ENCODE measurements at regions of chr20 and their contacts with region 1.

Region 1: GRCh38 chr20:59495894-59496510 is 108.3 kb upstream of the PHACTR3 start:
- DNase-seq: peak; percentile 80
- ATAC-seq: peak; percentile 95
- H3K4me3 Mint-ChIP-seq: no peak overlapping the region
- H3K27ac Mint-ChIP-seq: no peak overlapping the region
- H3K4me1 Mint-ChIP-seq: no peaks in the 10 kb centered on the region
- H3K27me3 Mint-ChIP-seq: peaks cover 28% of the 10 kb centered on the region
- CTCF ChIP-seq: peak; percentile 73

Region 2: DNA sequence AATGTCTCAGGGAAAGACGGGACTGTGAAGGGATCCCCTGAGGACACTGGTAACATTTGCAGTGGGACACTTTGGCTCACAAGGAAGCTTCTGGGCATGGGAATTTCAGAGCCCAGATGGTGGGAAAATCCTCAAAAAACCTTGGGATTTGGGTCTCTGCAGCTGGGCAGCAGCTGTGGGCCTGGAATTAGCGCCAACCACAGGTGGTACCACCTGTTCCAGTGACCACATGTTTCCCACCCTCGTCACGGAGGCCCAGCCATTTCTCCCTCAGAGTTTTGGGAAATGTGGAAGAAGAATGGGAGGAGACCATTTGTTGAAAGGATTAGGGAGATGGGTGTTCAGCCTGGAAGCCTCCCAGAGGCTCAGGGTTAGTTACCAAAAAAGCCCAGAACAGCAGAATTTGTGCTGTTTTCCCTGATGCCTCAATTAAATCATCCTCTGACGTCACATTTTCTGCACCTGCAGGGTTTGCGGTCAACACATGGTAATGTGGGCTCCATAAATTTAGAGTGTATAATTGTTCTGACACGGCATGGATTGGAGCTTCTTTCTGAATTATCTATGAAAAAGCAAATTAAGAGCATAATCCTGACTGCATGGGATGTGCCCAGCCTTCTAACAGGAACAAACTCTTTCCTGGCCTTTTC is 161.2 kb before region 1 on chr20:
- CTCF ChIA-PET with region 1: no interaction called
- POLR2A ChIA-PET with region 1: no interaction called
- DNase-seq: no peak
- ATAC-seq: no peak
- H3K4me3 Mint-ChIP-seq: no peak overlapping the region
- H3K27ac Mint-ChIP-seq: no peak overlapping the region
- H3K4me1 Mint-ChIP-seq: no peaks in the 10 kb centered on the region
- H3K27me3 Mint-ChIP-seq: peaks cover 2% of the 10 kb centered on the region; the same call in 1 of the 2 replicates
- CTCF ChIP-seq: no peak

Region 3: GRCh38 chr20:59403261-59403961 is 92.6 kb before region 1 on chr20:
- CTCF ChIA-PET with region 1: interaction called, 17 read pairs
- POLR2A ChIA-PET with region 1: no interaction called
- DNase-seq: peak; percentile 86
- ATAC-seq: peak; percentile 76
- H3K4me3 Mint-ChIP-seq: peak overlapping the region; percentile 58; the same call in 1 of the 2 replicates
- H3K27ac Mint-ChIP-seq: no peak overlapping the region
- H3K4me1 Mint-ChIP-seq: peaks cover 16% of the 10 kb centered on the region
- H3K27me3 Mint-ChIP-seq: peaks cover 12% of the 10 kb centered on the region
- CTCF ChIP-seq: peak; percentile 100

Region 4: DNA sequence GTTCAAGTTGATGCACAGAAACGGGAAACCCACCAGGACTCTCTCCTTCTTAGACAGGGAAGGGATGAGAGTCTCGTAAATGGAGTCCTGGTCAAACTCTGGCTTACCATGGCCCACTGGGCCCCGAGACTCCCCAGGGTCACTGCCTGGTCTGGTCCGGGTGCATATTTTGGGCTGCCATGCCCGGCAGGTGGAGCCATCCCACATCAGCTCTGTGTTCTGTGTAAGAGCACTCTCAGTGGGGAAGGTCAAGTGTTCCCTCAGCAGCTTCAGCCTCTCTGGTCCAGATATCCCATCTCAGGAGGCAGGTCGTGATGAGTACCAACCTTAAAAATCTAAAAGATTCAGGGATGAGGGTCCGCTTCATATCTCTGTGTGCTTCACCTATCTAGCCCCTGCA is 56.8 kb before region 1 on chr20:
- CTCF ChIA-PET with region 1: interaction called, 32 read pairs
- POLR2A ChIA-PET with region 1: no interaction called
- DNase-seq: peak; percentile 19
- ATAC-seq: no peak; the same call in 1 of the 2 replicates
- H3K4me3 Mint-ChIP-seq: no peak overlapping the region
- H3K27ac Mint-ChIP-seq: no peak overlapping the region
- H3K4me1 Mint-ChIP-seq: peaks cover 9% of the 10 kb centered on the region
- H3K27me3 Mint-ChIP-seq: peaks cover 3% of the 10 kb centered on the region; the same call in 1 of the 2 replicates
- CTCF ChIP-seq: no peak

Region 5: DNA sequence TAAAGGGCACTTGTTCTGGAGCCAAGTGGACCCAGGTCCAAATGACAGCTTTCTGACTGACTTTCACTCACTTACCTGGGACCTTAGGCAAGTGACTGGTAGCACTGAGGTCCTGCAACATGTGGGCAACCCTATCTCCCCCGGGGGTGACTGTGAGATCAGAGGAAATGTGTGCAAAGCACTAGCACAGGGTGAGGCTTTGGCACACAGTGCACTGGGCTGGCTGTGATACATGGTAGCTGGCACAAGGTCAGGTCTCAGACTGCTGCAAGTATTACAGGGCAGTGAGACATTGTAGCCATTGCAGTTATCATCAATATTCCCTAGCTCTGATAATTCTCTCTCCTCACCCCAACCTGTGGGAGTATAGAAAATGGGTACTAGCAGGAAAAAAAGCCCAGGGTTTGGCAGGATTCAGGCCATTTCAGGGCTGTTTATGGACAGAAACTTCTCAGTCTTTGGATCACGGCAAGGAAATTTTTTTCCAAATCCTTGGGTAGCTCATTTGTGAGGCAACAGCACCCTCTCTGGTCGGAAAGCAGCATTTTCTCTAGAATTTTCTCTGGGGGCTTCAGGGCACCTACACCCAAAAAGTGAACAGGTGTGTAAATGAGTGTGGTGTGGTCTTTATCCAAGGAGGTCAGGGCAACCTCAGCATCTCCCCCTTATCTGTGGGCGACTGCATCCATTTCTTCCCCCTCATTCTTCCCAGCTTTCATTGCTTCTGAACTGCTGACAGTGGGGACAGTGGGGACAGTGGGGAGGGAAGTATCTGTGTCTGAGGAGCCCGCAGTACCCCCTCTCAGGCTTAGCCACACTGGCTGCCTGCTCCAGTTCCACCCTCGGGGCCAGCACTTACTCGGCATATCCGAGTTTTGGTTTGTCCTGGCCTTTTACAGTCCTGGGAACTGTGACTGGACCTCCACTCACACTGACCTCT is 40.3 kb before region 1 on chr20:
- CTCF ChIA-PET with region 1: interaction called, 40 read pairs
- POLR2A ChIA-PET with region 1: no interaction called
- DNase-seq: no peak
- ATAC-seq: peak; percentile 57
- H3K4me3 Mint-ChIP-seq: no peak overlapping the region
- H3K27ac Mint-ChIP-seq: no peak overlapping the region
- H3K4me1 Mint-ChIP-seq: peaks cover 12% of the 10 kb centered on the region; the same call in 1 of the 2 replicates
- H3K27me3 Mint-ChIP-seq: peaks cover 7% of the 10 kb centered on the region
- CTCF ChIP-seq: peak; percentile 45; the same call in 1 of the 2 replicates

Region 6: GRCh38 chr20:59469267-59470252 is 26.4 kb before region 1 on chr20:
- CTCF ChIA-PET with region 1: interaction called, 20 read pairs
- POLR2A ChIA-PET with region 1: no interaction called
- DNase-seq: peak; percentile 48
- ATAC-seq: peak; percentile 86
- H3K4me3 Mint-ChIP-seq: no peak overlapping the region
- H3K27ac Mint-ChIP-seq: no peak overlapping the region
- H3K4me1 Mint-ChIP-seq: peaks cover 17% of the 10 kb centered on the region
- H3K27me3 Mint-ChIP-seq: peaks cover 7% of the 10 kb centered on the region
- CTCF ChIP-seq: no peak

Region 7: GRCh38 chr20:59515014-59515905 is 19.3 kb after region 1 on chr20:
- CTCF ChIA-PET with region 1: interaction called, 18 read pairs
- POLR2A ChIA-PET with region 1: no interaction called
- DNase-seq: peak; percentile 91
- ATAC-seq: peak; percentile 89
- H3K4me3 Mint-ChIP-seq: peak overlapping the region; percentile 63
- H3K27ac Mint-ChIP-seq: no peak overlapping the region
- H3K4me1 Mint-ChIP-seq: peaks cover 11% of the 10 kb centered on the region
- H3K27me3 Mint-ChIP-seq: peaks cover 22% of the 10 kb centered on the region
- CTCF ChIP-seq: peak; percentile 60

Measured in WTC11 (cell line).